ENCODE measurements at regions of chr4 and their contacts with region 1.

Region 1: DNA sequence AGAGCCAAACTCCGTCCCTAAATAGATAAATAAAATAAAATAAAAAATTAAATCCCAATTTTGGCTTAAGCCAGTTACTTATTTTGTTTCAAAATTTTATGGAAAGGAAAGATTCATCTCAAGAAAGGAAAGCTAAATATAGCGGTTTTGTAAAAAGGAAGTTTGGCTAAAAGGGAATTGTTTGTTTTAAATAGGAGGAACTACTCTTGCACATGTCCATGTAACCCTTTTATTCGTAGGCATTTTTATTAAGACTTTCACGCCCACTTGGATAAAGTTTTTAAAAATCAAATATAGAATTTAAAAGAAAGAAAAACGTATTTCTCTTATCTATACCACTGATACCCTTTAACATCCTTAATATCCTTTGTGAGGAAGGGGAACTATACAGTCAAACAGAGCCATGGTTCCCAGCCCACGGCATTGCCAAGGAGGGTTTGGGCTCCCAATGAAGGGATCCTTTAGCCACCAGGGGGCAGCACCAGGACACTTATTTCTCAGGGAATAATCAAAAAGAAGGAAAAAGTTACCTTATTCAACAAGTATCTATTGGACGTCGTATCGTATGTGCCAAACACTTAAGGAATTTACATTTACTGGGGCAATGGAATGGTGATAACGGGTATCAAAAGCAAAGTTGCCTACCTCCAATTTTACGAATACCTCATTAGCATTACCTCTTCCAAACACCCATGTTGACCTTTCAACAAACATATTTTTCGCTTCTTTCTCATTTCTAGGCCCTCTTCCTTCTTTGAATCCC is 27.7 kb downstream of the CDKN2AIP start:
- DNase-seq: peak; percentile 85
- H3K4me3 ChIP-seq: no peak overlapping the region
- H3K27ac ChIP-seq: no peak overlapping the region
- H3K4me1 ChIP-seq: no peaks in the 10 kb centered on the region
- H3K27me3 ChIP-seq: no peaks in the 10 kb centered on the region
- CTCF ChIP-seq: peak; percentile 95

Region 2: GRCh38 chr4:183602557-183603027 is 130.5 kb after region 1 on chr4:
- CTCF ChIA-PET with region 1: no interaction called
- POLR2A ChIA-PET with region 1: no interaction called
- intact Hi-C with region 1: loop called (anchors 1 kb)
- DNase-seq: no peak
- H3K4me3 ChIP-seq: no peak overlapping the region
- H3K27ac ChIP-seq: no peak overlapping the region
- H3K4me1 ChIP-seq: no peaks in the 10 kb centered on the region
- H3K27me3 ChIP-seq: peaks cover 6% of the 10 kb centered on the region
- CTCF ChIP-seq: peak; percentile 49

Region 3: GRCh38 chr4:183659029-183659871 is 187.1 kb after region 1 on chr4 and contains the starts of genes RWDD4 and TRAPPC11:
- CTCF ChIA-PET with region 1: no interaction called
- POLR2A ChIA-PET with region 1: no interaction called
- intact Hi-C with region 1: loop called (anchors 5 kb)
- DNase-seq: peak; percentile 99
- H3K4me3 ChIP-seq: peak within 1 kb of the TSS; percentile 91
- H3K27ac ChIP-seq: peak within 1 kb of the TSS; percentile 88
- H3K4me1 ChIP-seq: peaks cover 14% of the 10 kb centered on the region
- H3K27me3 ChIP-seq: no peaks in the 10 kb centered on the region
- CTCF ChIP-seq: no peak
- total RNA-seq, gene RWDD4: 29.4 and 33.8 TPM in 2 replicates
- total RNA-seq, gene TRAPPC11: 29.1 and 30.0 TPM in 2 replicates

Region 4: DNA sequence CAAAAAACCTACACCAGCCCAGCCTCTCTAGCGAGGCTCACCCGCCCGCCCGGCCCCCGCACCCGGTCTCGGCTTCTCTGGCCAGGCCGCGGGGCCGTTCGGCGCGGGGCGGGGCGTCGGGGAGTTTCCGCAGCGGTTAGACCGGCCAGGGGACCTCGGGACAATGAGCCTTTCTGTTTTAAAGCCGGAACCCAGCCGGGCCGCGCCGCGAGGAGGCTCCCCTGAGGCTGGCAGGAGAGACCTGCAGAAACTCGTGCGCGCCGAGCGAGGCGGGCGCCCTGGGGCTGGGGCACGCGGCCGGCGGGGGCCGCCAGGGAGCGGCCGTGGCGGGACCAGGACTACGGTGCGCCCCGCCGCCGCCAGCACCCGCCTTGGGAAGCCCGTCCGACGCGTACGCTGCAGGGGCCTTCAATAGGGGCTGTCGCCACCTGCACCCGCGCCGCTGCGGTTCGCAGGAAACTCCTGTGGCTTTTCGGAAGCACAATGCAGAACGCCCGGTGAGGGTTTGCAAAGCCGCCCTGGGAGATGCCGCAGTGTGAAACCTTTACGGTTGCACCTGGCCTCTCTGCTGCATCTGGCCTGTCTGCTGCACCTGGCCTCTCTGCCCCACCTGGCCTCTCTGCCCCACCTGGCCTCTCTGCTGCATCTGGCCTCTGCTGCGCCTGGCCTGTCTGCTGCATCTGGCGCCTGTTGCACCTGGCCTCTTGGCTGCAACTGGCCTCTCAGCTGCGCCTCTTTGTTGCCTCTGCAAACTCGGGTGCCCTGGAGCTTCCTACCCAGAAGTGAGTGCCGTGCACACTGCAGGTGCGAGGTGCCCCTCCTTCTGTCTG is 250.8 kb after region 1 on chr4:
- CTCF ChIA-PET with region 1: no interaction called
- POLR2A ChIA-PET with region 1: no interaction called
- intact Hi-C with region 1: loop called (anchors 10 kb)
- DNase-seq: peak; percentile 27
- H3K4me3 ChIP-seq: peak overlapping the region; percentile 48
- H3K27ac ChIP-seq: no peak overlapping the region
- H3K4me1 ChIP-seq: no peaks in the 10 kb centered on the region
- H3K27me3 ChIP-seq: no peaks in the 10 kb centered on the region
- CTCF ChIP-seq: no peak

Region 5: GRCh38 chr4:184168406-184169019 is 696.4 kb after region 1 on chr4:
- CTCF ChIA-PET with region 1: interaction called, 5 read pairs
- POLR2A ChIA-PET with region 1: no interaction called
- intact Hi-C with region 1: loop called (anchors 5 kb)
- DNase-seq: peak; percentile 61
- H3K4me3 ChIP-seq: no peak overlapping the region
- H3K27ac ChIP-seq: no peak overlapping the region
- H3K4me1 ChIP-seq: no peaks in the 10 kb centered on the region
- H3K27me3 ChIP-seq: no peaks in the 10 kb centered on the region
- CTCF ChIP-seq: peak; percentile 97

Measured in A673 (cell line).